HEK293 (cell line): ENCODE measurements at regions of chr11 and their contacts with region 1.

Region 1: DNA sequence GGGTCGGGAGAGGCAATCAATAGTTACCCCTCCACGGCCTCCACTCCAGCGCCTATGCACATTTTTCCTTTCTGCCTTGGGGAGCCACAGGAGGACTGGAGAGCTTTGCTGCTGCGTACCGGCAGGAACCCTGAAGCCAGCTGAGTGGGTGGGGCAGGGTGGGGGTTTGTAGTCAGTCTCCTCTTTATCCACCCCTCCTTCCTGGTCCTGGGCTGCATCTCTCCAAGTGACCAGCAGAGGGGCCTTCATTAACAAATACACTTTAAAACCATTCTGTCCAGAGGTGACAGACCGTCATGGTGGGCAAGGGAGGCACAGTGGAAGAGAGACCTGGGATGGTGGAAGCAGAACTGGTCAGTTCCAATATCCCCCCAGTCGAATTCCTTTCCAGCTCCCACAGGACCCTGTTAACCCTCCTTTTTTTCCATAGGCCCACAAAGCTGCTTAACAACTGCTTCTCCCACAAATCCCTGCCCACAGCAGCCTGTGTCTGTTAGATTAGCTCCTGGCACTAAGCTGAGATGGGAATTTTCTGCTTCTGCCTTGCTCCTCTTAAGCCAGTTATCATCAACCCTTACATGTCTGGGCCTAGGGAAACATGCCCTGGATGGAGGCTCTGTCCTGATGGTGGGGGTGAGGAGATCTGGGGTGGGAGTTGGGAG is 3.9 kb upstream of the ABCG4 start:
- H3K4me3 ChIP-seq: no peak overlapping the region
- H3K27ac ChIP-seq: no peak overlapping the region
- H3K4me1 ChIP-seq: no peaks in the 10 kb centered on the region
- CTCF ChIP-seq: no peak; the same call in 1 of the 2 replicates

Region 2: GRCh38 chr11:119196833-119197483 is 52.0 kb after region 1 on chr11:
- CTCF ChIA-PET with region 1: interaction called, 16 read pairs
- POLR2A ChIA-PET with region 1: no interaction called
- H3K4me3 ChIP-seq: no peak overlapping the region
- H3K27ac ChIP-seq: no peak overlapping the region
- H3K4me1 ChIP-seq: no peaks in the 10 kb centered on the region
- CTCF ChIP-seq: peak; percentile 60; the same call in 1 of the 2 replicates